Activated CD8-positive, alpha-beta T cell treated with anti-CD3 and anti-CD28 coated beads for 36 hours (primary cell): ENCODE measurements at regions of chr6 and their contacts with region 1.

Region 1: GRCh38 chr6:99330159-99330558 is 19.3 kb downstream of the FAXC start:
- DNase-seq: peak; percentile 83
- ATAC-seq: peak; percentile 95
- H3K4me3 Mint-ChIP-seq: no peak overlapping the region
- H3K27ac Mint-ChIP-seq: no peak overlapping the region
- H3K4me1 Mint-ChIP-seq: peaks cover 2% of the 10 kb centered on the region
- H3K27me3 Mint-ChIP-seq: peaks cover 6% of the 10 kb centered on the region
- CTCF ChIP-seq: peak; percentile 80

Region 2: GRCh38 chr6:99013145-99013544 is 317.0 kb before region 1 on chr6:
- CTCF ChIA-PET with region 1: no interaction called
- POLR2A ChIA-PET with region 1: no interaction called
- intact Hi-C with region 1: no loop called
- DNase-seq: no peak
- ATAC-seq: no peak
- H3K4me3 Mint-ChIP-seq: no peak overlapping the region
- H3K27ac Mint-ChIP-seq: no peak overlapping the region
- H3K4me1 Mint-ChIP-seq: no peaks in the 10 kb centered on the region
- H3K27me3 Mint-ChIP-seq: peaks cover 9% of the 10 kb centered on the region
- CTCF ChIP-seq: no peak

Region 3: GRCh38 chr6:99101370-99101769 is 228.8 kb before region 1 on chr6:
- CTCF ChIA-PET with region 1: no interaction called
- POLR2A ChIA-PET with region 1: no interaction called
- intact Hi-C with region 1: no loop called
- DNase-seq: no peak
- ATAC-seq: no peak
- H3K4me3 Mint-ChIP-seq: no peak overlapping the region
- H3K27ac Mint-ChIP-seq: no peak overlapping the region
- H3K4me1 Mint-ChIP-seq: no peaks in the 10 kb centered on the region
- H3K27me3 Mint-ChIP-seq: peaks cover 1% of the 10 kb centered on the region
- CTCF ChIP-seq: no peak

Region 4: GRCh38 chr6:99344289-99344688 is 14.1 kb after region 1 on chr6:
- CTCF ChIA-PET with region 1: interaction called, 17 read pairs
- POLR2A ChIA-PET with region 1: no interaction called
- intact Hi-C with region 1: no loop called
- DNase-seq: no peak
- ATAC-seq: peak; percentile 39
- H3K4me3 Mint-ChIP-seq: no peak overlapping the region
- H3K27ac Mint-ChIP-seq: no peak overlapping the region
- H3K4me1 Mint-ChIP-seq: peaks cover 2% of the 10 kb centered on the region
- H3K27me3 Mint-ChIP-seq: peaks cover 36% of the 10 kb centered on the region
- CTCF ChIP-seq: no peak

Region 5: GRCh38 chr6:99349171-99350141 is 19.3 kb after region 1 on chr6 and contains the start of gene FAXC:
- CTCF ChIA-PET with region 1: interaction called, 17 read pairs
- POLR2A ChIA-PET with region 1: no interaction called
- intact Hi-C with region 1: no loop called
- DNase-seq: peak; percentile 12
- ATAC-seq: peak; percentile 49
- H3K4me3 Mint-ChIP-seq: peak within 1 kb of the TSS; percentile 22
- H3K27ac Mint-ChIP-seq: no peak within 1 kb of the TSS
- H3K4me1 Mint-ChIP-seq: peaks cover 2% of the 10 kb centered on the region
- H3K27me3 Mint-ChIP-seq: peaks cover 53% of the 10 kb centered on the region
- CTCF ChIP-seq: no peak
- total RNA-seq, gene FAXC: not detected

Region 6: GRCh38 chr6:99425647-99426453 is 95.7 kb after region 1 on chr6:
- CTCF ChIA-PET with region 1: interaction called, 19 read pairs
- POLR2A ChIA-PET with region 1: no interaction called
- intact Hi-C with region 1: loop called (anchors 5 kb)
- DNase-seq: peak; percentile 85
- ATAC-seq: peak; percentile 52
- H3K4me3 Mint-ChIP-seq: peak overlapping the region; percentile 79
- H3K27ac Mint-ChIP-seq: peak overlapping the region; percentile 100
- H3K4me1 Mint-ChIP-seq: peaks cover 54% of the 10 kb centered on the region
- H3K27me3 Mint-ChIP-seq: no peaks in the 10 kb centered on the region
- CTCF ChIP-seq: peak; percentile 46